Right cardiac atrium (tissue), 5 donors: ENCODE measurements at regions of chr1 and their contacts with region 1.

Region 1: GRCh38 chr1:158998781-158999161 is 10.9 kb upstream of the IFI16 start:
- DNase-seq: peak; percentile 55 to 87 (median 83)
- ATAC-seq: peak; percentile 57 to 64
- H3K4me3 ChIP-seq: peak overlapping the region; percentile 84
- H3K27ac ChIP-seq: peak overlapping the region; percentile 36
- H3K4me1 ChIP-seq: no peaks in the 10 kb centered on the region
- H3K27me3 ChIP-seq: no peaks in the 10 kb centered on the region

Region 2: GRCh38 chr1:157963713-157964112 is 1035.1 kb before region 1 on chr1:
- intact Hi-C with region 1: loop called in 2 of 4 experiments (anchors 5 to 10 kb)
- DNase-seq: peak; percentile 64 to 87 (median 84)
- ATAC-seq: peak; percentile 82 to 88
- H3K4me3 ChIP-seq: no peak overlapping the region
- H3K27ac ChIP-seq: no peak overlapping the region
- H3K4me1 ChIP-seq: no peaks in the 10 kb centered on the region
- H3K27me3 ChIP-seq: no peaks in the 10 kb centered on the region

Region 3: GRCh38 chr1:158203693-158204457 is 794.9 kb before region 1 on chr1:
- intact Hi-C with region 1: loop called in 2 of 4 experiments (anchors 10 kb)
- DNase-seq: no peak
- ATAC-seq: peak; percentile 60 to 87
- H3K4me3 ChIP-seq: no peak overlapping the region
- H3K27ac ChIP-seq: no peak overlapping the region
- H3K4me1 ChIP-seq: no peaks in the 10 kb centered on the region
- H3K27me3 ChIP-seq: no peaks in the 10 kb centered on the region

Region 4: DNA sequence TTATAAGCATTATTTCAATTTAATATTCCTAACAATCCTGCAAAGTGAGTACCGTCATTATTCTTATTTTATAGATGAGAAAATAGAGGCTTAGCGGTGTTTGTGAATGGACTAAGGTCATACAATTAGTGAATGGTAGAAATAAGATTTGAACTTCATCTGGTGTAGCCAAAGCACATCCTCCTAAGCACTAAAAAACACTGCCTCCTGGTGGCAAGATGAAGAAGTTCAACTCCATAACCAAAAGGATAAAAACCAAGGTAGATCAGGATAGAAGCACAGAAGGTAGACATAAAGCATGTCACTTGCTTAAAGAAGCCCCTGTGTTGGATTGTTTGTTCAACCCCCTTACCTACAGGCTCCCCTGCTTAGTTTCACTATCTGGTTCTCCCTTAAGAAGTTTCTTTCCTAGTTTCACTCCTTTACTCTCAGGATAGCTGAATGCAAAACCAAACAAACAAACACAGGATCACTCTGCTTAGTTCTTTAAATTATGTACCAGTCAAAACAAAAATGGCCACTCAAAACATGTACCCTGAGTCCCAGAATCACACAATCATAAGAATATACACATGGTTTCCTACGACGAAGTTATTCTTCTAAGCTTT is 90.5 kb after region 1 on chr1:
- intact Hi-C with region 1: no loop called
- DNase-seq: no peak
- ATAC-seq: no peak
- H3K4me3 ChIP-seq: no peak overlapping the region
- H3K27ac ChIP-seq: no peak overlapping the region
- H3K4me1 ChIP-seq: no peaks in the 10 kb centered on the region
- H3K27me3 ChIP-seq: no peaks in the 10 kb centered on the region